ENCODE measurements at regions of chr9 and their contacts with region 1.

Region 1: GRCh38 chr9:114587385-114588202 is at the start of gene ATP6V1G1:
- DNase-seq: peak; percentile 97 to 100 (median 99)
- ATAC-seq: peak; percentile 90
- H3K4me3 ChIP-seq: peak within 1 kb of the TSS; percentile 89
- H3K4me3 Mint-ChIP-seq: peak within 1 kb of the TSS; percentile 99
- H3K27ac ChIP-seq: peak within 1 kb of the TSS; percentile 91 to 94
- H3K27ac Mint-ChIP-seq: peak within 1 kb of the TSS; percentile 99
- H3K4me1 ChIP-seq: peaks cover 47% of the 10 kb centered on the region
- H3K4me1 Mint-ChIP-seq: peaks cover 55% of the 10 kb centered on the region
- H3K27me3 ChIP-seq: no peaks in the 10 kb centered on the region
- H3K27me3 Mint-ChIP-seq: no peaks in the 10 kb centered on the region
- CTCF ChIP-seq: no peak
- total RNA-seq, gene ATP6V1G1: 144 to 148 TPM

Region 2: DNA sequence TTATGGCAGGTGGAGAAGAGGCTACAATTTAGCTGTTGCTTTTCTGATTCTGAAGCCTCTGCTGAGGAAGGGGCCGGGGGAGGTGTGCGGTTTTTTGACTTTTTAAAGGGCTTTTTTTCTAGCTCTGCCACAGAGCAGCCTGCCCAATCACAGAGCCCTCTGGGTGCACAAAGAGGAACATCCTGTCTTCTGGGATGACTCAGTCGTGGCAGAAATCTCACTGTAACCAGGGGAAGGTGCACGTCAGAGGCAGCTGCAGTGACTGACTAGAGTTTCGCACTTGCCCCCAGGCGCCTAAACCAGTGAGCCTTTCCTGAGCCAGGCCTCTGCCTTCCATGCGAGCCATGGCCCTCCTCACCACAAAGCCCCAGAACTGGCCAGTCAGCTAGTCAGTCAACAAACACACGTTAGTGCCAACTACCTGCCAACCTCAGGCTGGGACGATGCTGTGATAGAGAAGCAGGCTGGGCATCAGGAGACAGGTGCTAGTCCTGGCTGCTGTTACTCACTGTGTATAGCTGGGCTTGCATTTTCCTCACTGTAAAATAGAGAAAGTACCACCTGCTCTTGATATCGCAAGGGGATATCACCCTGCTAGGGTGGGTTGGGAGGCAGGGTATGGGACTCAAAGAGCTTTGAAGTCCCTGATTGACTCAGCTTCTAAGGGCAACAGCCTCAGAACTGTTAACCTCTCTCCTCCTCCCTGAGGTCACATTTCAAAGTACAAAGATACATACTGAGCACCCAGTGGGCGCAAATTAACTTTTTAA is 202.0 kb before region 1 on chr9:
- CTCF ChIA-PET with region 1: interaction called, 4 read pairs
- POLR2A ChIA-PET with region 1: interaction called, 16 read pairs
- intact Hi-C with region 1: loop called (anchors 5 kb)
- DNase-seq: peak; percentile 74 to 97 (median 82)
- ATAC-seq: peak; percentile 78
- H3K4me3 ChIP-seq: peak overlapping the region; percentile 99
- H3K4me3 Mint-ChIP-seq: peak overlapping the region; percentile 95
- H3K27ac ChIP-seq: peak overlapping the region; percentile 71 to 97
- H3K27ac Mint-ChIP-seq: peak overlapping the region; percentile 98
- H3K4me1 ChIP-seq: peaks cover 85% of the 10 kb centered on the region
- H3K4me1 Mint-ChIP-seq: peaks cover 80% of the 10 kb centered on the region
- H3K27me3 ChIP-seq: no peaks in the 10 kb centered on the region
- H3K27me3 Mint-ChIP-seq: no peaks in the 10 kb centered on the region
- CTCF ChIP-seq: no peak

Region 3: DNA sequence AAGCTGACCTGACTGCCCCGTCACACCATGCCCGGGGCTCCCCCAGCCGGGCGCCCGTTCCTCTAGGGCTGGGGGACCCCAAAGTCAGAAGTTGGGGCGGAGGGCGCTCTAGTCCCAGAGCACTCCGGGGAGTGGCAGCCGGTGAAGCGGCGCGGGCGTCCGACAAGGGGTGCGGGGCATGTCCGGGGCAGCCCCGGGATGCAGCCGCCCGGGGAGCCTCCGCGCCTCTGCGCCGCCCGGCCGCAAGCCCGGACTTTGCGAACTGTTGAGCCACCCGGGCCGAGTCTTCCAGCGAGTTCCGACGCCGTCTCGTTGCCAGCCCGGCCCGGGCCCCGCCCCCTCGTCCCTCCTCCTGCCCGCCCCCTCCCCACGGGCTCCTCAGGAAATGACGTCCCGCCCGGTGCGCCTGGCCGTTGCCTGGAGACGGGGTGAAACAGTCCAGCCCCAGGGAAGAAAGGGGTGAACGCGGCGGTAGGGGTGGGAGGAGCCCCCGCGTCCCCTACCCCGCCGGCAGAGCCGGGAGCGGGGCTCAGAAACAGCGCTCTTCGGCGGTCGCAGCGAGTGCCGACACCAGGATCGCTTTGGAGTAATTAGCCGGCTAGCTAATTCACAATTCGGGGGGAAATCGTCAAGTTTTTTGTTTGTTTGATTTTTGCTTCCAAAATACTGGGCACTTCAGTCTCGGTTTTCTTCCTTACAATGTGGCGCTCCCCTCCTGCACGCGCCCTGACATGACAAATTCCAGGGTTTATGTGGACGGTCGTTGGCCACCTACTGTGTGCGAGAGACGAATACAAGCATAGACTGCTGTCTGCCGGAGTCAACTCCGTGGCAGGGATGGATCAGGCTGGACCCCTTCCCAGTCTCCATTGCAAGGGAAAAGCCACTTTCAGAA is 82.2 kb before region 1 on chr9 and contains the start of gene WHRN:
- CTCF ChIA-PET with region 1: interaction called, 3 read pairs
- POLR2A ChIA-PET with region 1: interaction called, 9 read pairs
- intact Hi-C with region 1: loop called in 1 of 2 experiments (anchors 2 kb)
- DNase-seq: peak; percentile 79 to 97 (median 88)
- ATAC-seq: peak; percentile 86
- H3K4me3 ChIP-seq: peak within 1 kb of the TSS; percentile 67
- H3K4me3 Mint-ChIP-seq: peak within 1 kb of the TSS; percentile 89
- H3K27ac ChIP-seq: peak within 1 kb of the TSS in 1 of 2 donors; percentile 46
- H3K27ac Mint-ChIP-seq: peak within 1 kb of the TSS; percentile 80
- H3K4me1 ChIP-seq: peaks cover 34% of the 10 kb centered on the region
- H3K4me1 Mint-ChIP-seq: peaks cover 37% of the 10 kb centered on the region
- H3K27me3 ChIP-seq: peaks cover 2 to 5% of the 10 kb centered on the region in 2 experiments
- H3K27me3 Mint-ChIP-seq: peaks cover 30% of the 10 kb centered on the region
- CTCF ChIP-seq: no peak
- total RNA-seq, gene WHRN: 19.9 to 20.5 TPM

Region 4: GRCh38 chr9:114559830-114560513 is 27.6 kb before region 1 on chr9:
- CTCF ChIA-PET with region 1: no interaction called
- POLR2A ChIA-PET with region 1: no interaction called
- intact Hi-C with region 1: no loop called
- DNase-seq: peak in 1 of 14 experiments; percentile 39
- ATAC-seq: no peak
- H3K4me3 ChIP-seq: no peak overlapping the region
- H3K4me3 Mint-ChIP-seq: no peak overlapping the region
- H3K27ac ChIP-seq: no peak overlapping the region
- H3K27ac Mint-ChIP-seq: no peak overlapping the region
- H3K4me1 ChIP-seq: no peaks in the 10 kb centered on the region
- H3K4me1 Mint-ChIP-seq: no peaks in the 10 kb centered on the region
- H3K27me3 ChIP-seq: no peaks in the 10 kb centered on the region
- H3K27me3 Mint-ChIP-seq: peaks cover 28% of the 10 kb centered on the region
- CTCF ChIP-seq: no peak

Region 5: DNA sequence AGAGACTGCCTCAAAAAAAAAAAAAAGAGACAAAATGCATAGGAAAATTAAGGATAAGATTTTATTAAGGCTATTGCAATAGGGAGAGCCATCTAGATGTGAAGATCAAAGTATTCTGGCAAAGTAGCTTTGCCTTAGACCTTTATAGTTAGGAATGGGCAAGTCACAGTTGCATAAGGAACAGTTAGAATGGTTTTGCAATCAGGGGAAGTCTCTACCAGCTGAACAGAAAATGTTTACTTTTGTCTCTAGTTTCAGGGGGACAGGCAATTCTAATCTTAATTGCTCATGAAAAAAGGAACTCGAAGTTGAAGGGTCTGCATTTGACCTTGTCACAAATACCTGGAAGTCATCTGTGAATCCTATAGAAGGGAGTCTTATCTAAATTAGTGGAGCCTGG is 13.2 kb before region 1 on chr9:
- CTCF ChIA-PET with region 1: interaction called, 3 read pairs
- POLR2A ChIA-PET with region 1: interaction called, 11 read pairs
- intact Hi-C with region 1: no loop called
- DNase-seq: no peak
- ATAC-seq: no peak
- H3K4me3 ChIP-seq: no peak overlapping the region
- H3K4me3 Mint-ChIP-seq: no peak overlapping the region
- H3K27ac ChIP-seq: no peak overlapping the region
- H3K27ac Mint-ChIP-seq: no peak overlapping the region
- H3K4me1 ChIP-seq: no peaks in the 10 kb centered on the region
- H3K4me1 Mint-ChIP-seq: no peaks in the 10 kb centered on the region
- H3K27me3 ChIP-seq: no peaks in the 10 kb centered on the region
- H3K27me3 Mint-ChIP-seq: no peaks in the 10 kb centered on the region
- CTCF ChIP-seq: no peak

Region 6: DNA sequence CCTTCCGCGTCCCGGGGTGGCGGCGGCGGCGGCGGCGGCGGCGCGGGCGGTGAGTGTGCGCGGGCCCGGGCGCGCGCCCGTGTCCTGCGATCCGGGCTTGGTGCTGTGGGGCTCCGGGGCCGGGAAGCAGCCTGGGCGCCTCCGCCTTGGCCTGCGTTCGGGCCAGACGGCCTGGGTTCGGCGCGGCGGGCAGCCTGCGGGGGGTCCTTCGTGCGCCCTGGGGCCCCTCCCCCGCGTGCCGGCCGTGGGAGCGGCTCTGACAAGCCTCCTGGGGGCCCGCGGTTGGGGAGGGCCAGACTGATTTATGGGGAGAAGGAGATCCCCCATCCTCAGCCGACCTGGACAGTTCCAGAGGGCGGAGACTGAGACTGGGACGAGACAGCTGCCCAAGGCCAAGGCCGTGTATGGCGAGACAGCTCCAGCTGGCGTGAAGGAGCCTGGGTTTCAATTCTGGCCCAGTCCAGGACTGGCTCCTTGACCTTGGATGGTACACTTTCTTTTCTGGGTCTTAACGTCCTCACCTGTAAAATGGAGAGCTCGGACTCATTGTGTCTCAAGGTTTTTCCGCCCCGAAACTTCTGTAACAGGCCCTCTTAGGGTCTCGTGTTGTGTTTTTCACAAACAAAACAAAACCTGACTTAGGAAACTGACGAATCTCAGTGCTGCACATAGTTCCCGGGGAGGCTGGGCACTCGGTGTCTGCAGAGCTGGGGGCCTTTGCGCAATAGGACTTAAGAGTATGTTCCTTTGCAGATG is 24.1 kb after region 1 on chr9:
- CTCF ChIA-PET with region 1: interaction called, 16 read pairs
- POLR2A ChIA-PET with region 1: interaction called, 113 read pairs
- intact Hi-C with region 1: loop called (anchors 1 to 2 kb)
- DNase-seq: peak in 13 of 14 experiments; percentile 19 to 78 (median 50)
- ATAC-seq: peak; percentile 70
- H3K4me3 ChIP-seq: peak overlapping the region; percentile 90
- H3K4me3 Mint-ChIP-seq: peak overlapping the region; percentile 97
- H3K27ac ChIP-seq: peak overlapping the region; percentile 68 to 78
- H3K27ac Mint-ChIP-seq: peak overlapping the region; percentile 92
- H3K4me1 ChIP-seq: peaks cover 43% of the 10 kb centered on the region
- H3K4me1 Mint-ChIP-seq: peaks cover 48% of the 10 kb centered on the region
- H3K27me3 ChIP-seq: no peaks in the 10 kb centered on the region
- H3K27me3 Mint-ChIP-seq: no peaks in the 10 kb centered on the region
- CTCF ChIP-seq: no peak

Region 7: DNA sequence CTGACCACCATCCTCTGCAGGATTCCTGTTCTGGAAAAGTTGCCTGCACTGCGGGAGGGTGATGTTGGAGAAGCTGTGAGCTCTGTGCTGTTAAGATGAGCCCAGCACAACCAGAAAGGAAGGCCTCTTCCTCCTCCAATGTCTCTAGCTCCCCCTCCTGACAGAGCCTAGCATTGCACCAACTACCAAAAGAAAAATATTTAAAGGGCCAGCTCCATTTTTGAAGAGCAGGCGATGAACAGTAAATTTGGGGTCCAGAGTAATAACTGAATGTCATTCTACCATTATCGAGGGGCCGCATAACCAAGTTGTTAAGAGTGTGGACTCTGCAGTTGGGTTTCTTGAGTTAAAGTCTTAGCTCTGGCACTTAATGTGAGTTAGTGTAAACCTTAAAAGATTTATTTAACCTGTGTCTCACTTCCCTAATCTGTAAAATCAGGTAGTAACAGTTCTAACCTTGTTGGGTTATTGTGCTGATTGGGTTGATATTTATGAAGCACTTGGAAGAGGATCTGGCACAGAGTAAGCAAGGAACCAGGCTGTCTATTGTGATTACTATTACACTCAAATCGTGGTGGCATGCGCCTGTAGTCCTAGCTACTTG is 66.1 kb after region 1 on chr9:
- CTCF ChIA-PET with region 1: interaction called, 38 read pairs
- POLR2A ChIA-PET with region 1: interaction called, 56 read pairs
- intact Hi-C with region 1: loop called (anchors 1 to 2 kb)
- DNase-seq: peak; percentile 59 to 89 (median 82)
- ATAC-seq: peak; percentile 99
- H3K4me3 ChIP-seq: no peak overlapping the region
- H3K4me3 Mint-ChIP-seq: no peak overlapping the region
- H3K27ac ChIP-seq: no peak overlapping the region
- H3K27ac Mint-ChIP-seq: peak overlapping the region; percentile 30
- H3K4me1 ChIP-seq: peaks cover 8% of the 10 kb centered on the region
- H3K4me1 Mint-ChIP-seq: peaks cover 21% of the 10 kb centered on the region
- H3K27me3 ChIP-seq: no peaks in the 10 kb centered on the region
- H3K27me3 Mint-ChIP-seq: no peaks in the 10 kb centered on the region
- CTCF ChIP-seq: peak; percentile 88